AG04449 (cell line): ENCODE measurements at regions of chr15 and their contacts with region 1.

Region 1: DNA sequence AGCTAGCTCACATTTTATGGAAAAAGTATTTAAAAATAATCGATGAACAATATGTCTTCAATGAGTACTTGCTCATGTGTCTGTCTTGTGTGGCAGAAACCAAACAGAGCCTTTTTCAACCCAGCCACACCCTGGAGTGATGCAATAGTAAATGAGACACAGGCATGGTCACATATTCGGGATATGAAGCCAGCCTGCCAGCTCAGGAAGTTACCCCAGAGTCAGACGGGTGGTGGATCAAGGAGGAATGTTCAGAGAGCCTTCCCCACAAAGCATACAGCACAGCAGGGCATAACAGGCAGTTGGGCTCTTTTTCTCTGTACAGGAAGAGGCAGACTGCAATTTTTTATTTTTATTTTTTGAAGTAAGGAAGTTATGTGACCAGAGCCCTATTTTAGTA is 27.3 kb downstream of the LARP6 start:
- DNase-seq: peak; percentile 66
- H3K4me3 ChIP-seq: no peak overlapping the region
- CTCF ChIP-seq: no peak

Region 2: GRCh38 chr15:70722266-70723121 is 104.1 kb before region 1 on chr15:
- CTCF ChIA-PET with region 1: interaction called, 15 read pairs
- POLR2A ChIA-PET with region 1: no interaction called
- DNase-seq: no peak
- H3K4me3 ChIP-seq: no peak overlapping the region
- CTCF ChIP-seq: peak; percentile 42

Region 3: GRCh38 chr15:70762469-70763119 is 64.0 kb before region 1 on chr15:
- CTCF ChIA-PET with region 1: no interaction called
- POLR2A ChIA-PET with region 1: no interaction called
- DNase-seq: no peak
- H3K4me3 ChIP-seq: peak overlapping the region; percentile 77
- CTCF ChIP-seq: no peak

Region 4: GRCh38 chr15:70845602-70846360 is 19.1 kb after region 1 on chr15:
- CTCF ChIA-PET with region 1: interaction called, 13 read pairs
- POLR2A ChIA-PET with region 1: no interaction called
- DNase-seq: no peak
- H3K4me3 ChIP-seq: no peak overlapping the region
- CTCF ChIP-seq: no peak

Region 5: GRCh38 chr15:70870051-70870450 is 43.4 kb after region 1 on chr15:
- CTCF ChIA-PET with region 1: interaction called, 76 read pairs
- POLR2A ChIA-PET with region 1: no interaction called
- DNase-seq: no peak
- H3K4me3 ChIP-seq: no peak overlapping the region
- CTCF ChIP-seq: no peak